Lower leg skin (tissue), 4 donors: ENCODE measurements at regions of chr15 and their contacts with region 1.

Region 1: DNA sequence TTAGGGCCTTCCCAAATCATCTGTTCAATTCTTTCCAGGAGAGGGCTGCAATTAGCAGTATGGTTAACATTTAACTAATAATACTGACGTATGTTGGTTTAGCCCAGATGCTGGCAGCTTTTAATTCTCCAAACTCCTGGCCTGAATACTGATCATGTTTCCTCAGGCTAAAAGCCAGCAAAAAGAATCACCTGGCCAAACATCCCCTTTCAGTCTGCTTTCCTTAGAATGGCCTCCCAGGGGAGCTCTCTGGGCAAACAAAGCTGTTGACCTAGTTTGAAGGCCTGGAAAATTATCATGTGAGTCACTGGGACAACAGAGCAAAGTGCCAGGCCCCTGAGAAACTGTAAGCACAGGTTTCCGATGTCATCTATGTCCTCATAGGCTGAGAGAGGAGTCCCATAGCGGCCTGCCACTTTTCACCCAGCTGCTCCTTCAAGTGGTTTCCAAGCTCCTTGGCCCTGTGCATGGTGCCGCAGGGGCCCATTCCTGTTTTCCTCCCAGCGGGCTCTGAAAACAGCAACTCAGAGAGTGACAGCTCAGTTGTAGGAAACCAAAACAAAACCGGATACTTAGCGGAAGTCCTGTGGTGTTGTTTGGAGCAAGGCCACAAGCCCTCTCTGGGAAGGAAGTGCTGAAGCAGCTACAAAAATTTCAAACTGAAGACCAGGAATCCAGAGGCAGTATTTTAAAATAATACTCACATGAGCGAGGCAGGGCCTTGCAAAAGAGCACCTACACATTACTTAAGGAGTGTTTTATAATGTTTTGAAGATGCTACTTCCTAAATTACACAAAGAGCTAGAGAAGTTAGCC is 36.5 kb upstream of the RAB11A start:
- DNase-seq: peak; percentile 90 to 95
- H3K4me3 ChIP-seq: no peak overlapping the region
- CTCF ChIP-seq: no peak
- POLR2A ChIP-seq: no peak

Region 2: GRCh38 chr15:63939531-63940130 is 1893.1 kb before region 1 on chr15:
- intact Hi-C with region 1: loop called (anchors 5 kb)
- DNase-seq: peak; percentile 48 to 88
- H3K4me3 ChIP-seq: no peak overlapping the region
- CTCF ChIP-seq: peak in 1 of 3 donors; percentile 73
- POLR2A ChIP-seq: no peak

Region 3: GRCh38 chr15:65896236-65896635 is 63.5 kb after region 1 on chr15:
- intact Hi-C with region 1: no loop called
- DNase-seq: no peak
- H3K4me3 ChIP-seq: no peak overlapping the region
- CTCF ChIP-seq: no peak
- POLR2A ChIP-seq: no peak